PC-9 (cell line): ENCODE measurements at regions of chr10 and their contacts with region 1.

Region 1: GRCh38 chr10:31940839-31941653 is 12.4 kb upstream of the ARHGAP12 start:
- DNase-seq: peak; percentile 91 to 95
- H3K4me3 ChIP-seq: peak overlapping the region; percentile 32; the same call in 1 of the 2 replicates
- H3K27ac ChIP-seq: peak overlapping the region; percentile 93
- H3K4me1 ChIP-seq: peaks cover 85% of the 10 kb centered on the region
- H3K27me3 ChIP-seq: no peaks in the 10 kb centered on the region
- CTCF ChIP-seq: no peak

Region 2: GRCh38 chr10:31912898-31913852 is 27.9 kb before region 1 on chr10:
- CTCF ChIA-PET with region 1: interaction called, 4 read pairs
- POLR2A ChIA-PET with region 1: no interaction called
- intact Hi-C with region 1: loop called (anchors 2 kb)
- DNase-seq: peak in 1 of 2 experiments; percentile 44
- H3K4me3 ChIP-seq: no peak overlapping the region
- H3K27ac ChIP-seq: peak overlapping the region; percentile 23; the same call in 1 of the 2 replicates
- H3K4me1 ChIP-seq: peaks cover 31% of the 10 kb centered on the region
- H3K27me3 ChIP-seq: no peaks in the 10 kb centered on the region
- CTCF ChIP-seq: no peak

Region 3: DNA sequence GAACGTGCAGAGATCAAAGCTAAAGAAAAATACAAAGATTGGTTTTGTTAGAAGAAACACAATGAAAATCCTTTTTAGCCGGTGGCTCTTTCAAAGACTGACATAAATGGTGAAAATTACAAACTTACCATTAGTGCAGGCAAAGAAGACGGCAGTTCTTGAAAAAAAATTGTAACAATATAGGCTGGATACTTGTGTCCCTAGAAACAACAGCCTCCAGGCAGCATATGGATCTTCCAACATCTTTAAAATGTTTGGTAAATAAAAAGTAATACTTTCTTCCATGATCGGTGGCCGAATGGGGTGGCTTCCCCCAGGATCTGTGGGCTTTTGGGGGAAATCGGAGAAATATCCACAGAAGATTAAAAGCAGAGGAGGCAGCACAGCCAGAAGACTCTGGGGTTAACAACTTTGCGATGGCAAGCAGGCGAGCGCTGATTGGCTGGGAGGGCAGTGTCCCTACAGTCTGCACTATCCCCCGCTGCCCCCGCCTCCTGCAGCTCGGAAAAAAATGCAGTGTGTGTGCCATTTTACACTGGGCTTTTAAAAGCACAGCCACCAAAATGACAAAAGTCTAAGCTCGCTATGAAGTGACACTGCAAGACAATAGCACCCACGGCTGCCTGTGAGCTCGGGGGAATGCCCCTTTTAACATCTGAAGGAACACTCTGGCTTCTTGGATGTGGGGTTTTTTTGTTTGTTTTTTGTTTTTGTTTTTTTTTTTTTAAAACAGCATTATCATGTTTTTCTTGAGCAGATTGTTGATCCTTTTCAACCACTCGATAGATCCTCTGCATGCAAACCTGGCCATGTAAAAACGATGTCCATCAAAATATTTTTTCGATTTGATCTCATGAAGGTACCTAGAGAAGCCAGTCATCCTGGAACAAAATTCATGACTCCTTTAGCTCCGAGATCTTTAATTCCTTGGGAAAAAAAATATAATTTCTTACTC is 437.6 kb after region 1 on chr10:
- CTCF ChIA-PET with region 1: no interaction called
- POLR2A ChIA-PET with region 1: interaction called, 10 read pairs
- intact Hi-C with region 1: no loop called
- DNase-seq: peak; percentile 68 to 84
- H3K4me3 ChIP-seq: peak overlapping the region; percentile 88
- H3K27ac ChIP-seq: peak overlapping the region; percentile 79
- H3K4me1 ChIP-seq: peaks cover 17% of the 10 kb centered on the region
- H3K27me3 ChIP-seq: no peaks in the 10 kb centered on the region
- CTCF ChIP-seq: no peak